Naive thymus-derived CD4-positive, alpha-beta T cell (primary cell): ENCODE measurements at regions of chr17 and their contacts with region 1.

Region 1: DNA sequence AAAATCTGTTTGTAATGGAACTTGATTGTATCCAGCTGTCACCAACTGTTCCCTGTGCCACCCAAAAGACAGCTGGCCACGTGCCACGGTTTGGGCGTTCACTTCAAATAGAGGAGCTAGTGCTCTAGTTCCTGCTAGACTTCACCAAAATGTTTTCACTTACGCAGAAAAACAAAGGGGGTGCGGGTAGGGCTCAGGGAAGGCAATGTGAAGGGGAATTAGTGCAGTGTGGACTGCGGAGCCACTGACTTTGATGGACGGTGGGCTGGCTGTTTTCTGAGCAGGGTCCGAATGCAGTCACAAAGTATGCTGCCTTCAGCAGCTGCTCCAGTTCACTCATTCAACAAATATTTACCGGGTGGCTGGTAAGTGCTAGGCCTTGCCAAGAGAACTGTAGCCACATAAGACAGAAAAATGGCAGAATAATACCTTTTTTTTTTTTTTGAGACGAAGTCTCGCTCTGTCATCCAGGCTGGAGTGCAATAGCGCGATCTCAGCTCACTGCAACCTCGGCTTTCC is 7.6 kb upstream of the CYTH1 start:
- DNase-seq: peak in 8 of 9 donors; percentile 45 to 90 (median 86)
- ATAC-seq: peak; percentile 80
- H3K4me3 ChIP-seq: no peak overlapping the region
- H3K4me3 Mint-ChIP-seq: peak overlapping the region; percentile 36 to 82 (median 74)
- H3K27ac ChIP-seq: peak overlapping the region; percentile 72
- H3K27ac Mint-ChIP-seq: peak overlapping the region; percentile 69 to 98 (median 96)
- H3K4me1 ChIP-seq: peaks cover 37 to 65% of the 10 kb centered on the region in 2 donors
- H3K4me1 Mint-ChIP-seq: peaks cover 40 to 91% (median 71%) of the 10 kb centered on the region in 7 donors
- H3K27me3 ChIP-seq: no peaks in the 10 kb centered on the region
- H3K27me3 Mint-ChIP-seq: no peaks in the 10 kb centered on the region

Region 2: DNA sequence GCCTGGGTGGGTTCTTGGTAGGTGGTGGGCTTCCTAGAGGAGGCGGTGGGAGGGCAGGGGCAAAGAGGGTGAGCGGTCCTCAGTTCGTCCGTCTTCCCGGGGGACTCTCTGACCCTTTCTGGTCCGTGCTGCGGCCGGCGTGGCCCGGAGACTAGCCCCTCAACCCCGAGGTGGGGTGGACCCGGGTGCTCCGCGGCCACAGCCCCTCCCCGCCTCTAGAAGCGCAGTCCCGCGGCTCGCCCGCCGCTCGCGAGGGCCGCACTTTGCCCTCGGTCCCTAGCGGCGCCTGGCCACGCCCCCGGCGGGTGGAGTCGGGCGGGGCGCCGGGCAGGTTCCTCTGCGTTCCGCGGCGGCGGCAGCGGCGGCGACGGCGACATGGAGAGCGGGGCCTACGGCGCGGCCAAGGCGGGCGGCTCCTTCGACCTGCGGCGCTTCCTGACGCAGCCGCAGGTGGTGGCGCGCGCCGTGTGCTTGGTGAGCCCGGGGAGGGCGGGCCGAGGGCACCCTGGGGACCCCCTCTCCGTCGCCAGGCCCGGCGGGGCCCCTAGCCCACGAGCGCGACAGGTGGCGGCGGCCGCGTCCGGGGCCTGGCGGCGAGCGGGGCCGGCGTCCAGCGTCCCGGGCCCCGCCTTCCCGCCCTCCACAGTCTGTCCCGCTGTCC is 621.4 kb before region 1 on chr17 and contains the start of gene SYNGR2:
- CTCF ChIA-PET with region 1: no interaction called
- POLR2A ChIA-PET with region 1: no interaction called
- intact Hi-C with region 1: no loop called
- DNase-seq: peak; percentile 80 to 94 (median 87)
- ATAC-seq: peak; percentile 91
- H3K4me3 ChIP-seq: peak within 1 kb of the TSS; percentile 58
- H3K4me3 Mint-ChIP-seq: peak within 1 kb of the TSS; percentile 64 to 83 (median 73)
- H3K27ac ChIP-seq: peak within 1 kb of the TSS; percentile 89
- H3K27ac Mint-ChIP-seq: peak within 1 kb of the TSS; percentile 31 to 88 (median 66)
- H3K4me1 ChIP-seq: peaks cover 6 to 25% of the 10 kb centered on the region in 2 donors
- H3K4me1 Mint-ChIP-seq: peaks cover 22 to 40% (median 35%) of the 10 kb centered on the region in 7 donors
- H3K27me3 ChIP-seq: no peaks in the 10 kb centered on the region
- H3K27me3 Mint-ChIP-seq: no peaks in the 10 kb centered on the region
- total RNA-seq, gene SYNGR2: 47.6 to 109 (median 58.6) TPM

Region 3: DNA sequence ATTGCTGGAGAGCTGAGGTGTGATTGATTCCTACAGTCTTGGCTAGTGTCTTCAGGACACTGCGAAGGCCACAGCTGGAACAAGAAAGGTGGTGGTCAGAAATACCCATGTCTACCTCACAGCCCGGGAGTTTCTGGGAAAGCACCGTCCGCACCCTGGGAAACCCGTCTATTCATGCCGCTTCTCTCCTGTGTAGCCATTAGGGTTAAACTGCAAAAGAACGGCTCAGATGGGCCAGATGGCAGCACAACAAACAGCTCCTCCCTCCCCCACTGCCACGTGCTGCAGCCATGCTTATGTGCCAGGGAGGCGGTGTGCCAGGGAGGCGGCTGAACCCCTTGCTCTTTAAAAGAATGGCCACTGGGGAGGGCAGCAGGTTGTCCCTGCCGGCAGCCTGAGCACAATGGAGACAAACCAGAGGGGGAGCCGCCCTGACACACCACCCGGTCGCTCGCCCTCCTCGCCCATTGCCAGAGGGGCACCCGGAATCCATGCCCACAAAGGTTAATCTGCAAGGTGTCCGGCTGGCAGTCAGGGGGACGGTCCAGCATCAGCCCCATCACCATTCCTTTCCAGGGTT is 72.8 kb before region 1 on chr17:
- CTCF ChIA-PET with region 1: interaction called, 14 read pairs
- POLR2A ChIA-PET with region 1: interaction called, 3 read pairs
- intact Hi-C with region 1: no loop called
- DNase-seq: peak in 6 of 9 donors; percentile 31 to 60 (median 42)
- ATAC-seq: peak; percentile 55
- H3K4me3 ChIP-seq: peak overlapping the region; percentile 5
- H3K4me3 Mint-ChIP-seq: peak overlapping the region; percentile 53 to 88 (median 78)
- H3K27ac ChIP-seq: peak overlapping the region; percentile 68
- H3K27ac Mint-ChIP-seq: peak overlapping the region in 8 of 9 donors; percentile 77 to 92 (median 88)
- H3K4me1 ChIP-seq: peaks cover 81 to 84% of the 10 kb centered on the region in 2 donors
- H3K4me1 Mint-ChIP-seq: peaks cover 71 to 98% (median 91%) of the 10 kb centered on the region in 7 donors
- H3K27me3 ChIP-seq: no peaks in the 10 kb centered on the region
- H3K27me3 Mint-ChIP-seq: no peaks in the 10 kb centered on the region

Region 4: GRCh38 chr17:78723001-78723796 is 66.5 kb before region 1 on chr17:
- CTCF ChIA-PET with region 1: interaction called, 14 read pairs
- POLR2A ChIA-PET with region 1: interaction called, 10 read pairs
- intact Hi-C with region 1: no loop called
- DNase-seq: no peak
- ATAC-seq: no peak
- H3K4me3 ChIP-seq: no peak overlapping the region
- H3K4me3 Mint-ChIP-seq: peak overlapping the region; percentile 33 to 88 (median 78)
- H3K27ac ChIP-seq: peak overlapping the region; percentile 50
- H3K27ac Mint-ChIP-seq: peak overlapping the region; percentile 50 to 96 (median 90)
- H3K4me1 ChIP-seq: peaks cover 95 to 97% of the 10 kb centered on the region in 2 donors
- H3K4me1 Mint-ChIP-seq: peaks cover 88 to 99% (median 94%) of the 10 kb centered on the region in 7 donors
- H3K27me3 ChIP-seq: no peaks in the 10 kb centered on the region
- H3K27me3 Mint-ChIP-seq: no peaks in the 10 kb centered on the region

Region 5: DNA sequence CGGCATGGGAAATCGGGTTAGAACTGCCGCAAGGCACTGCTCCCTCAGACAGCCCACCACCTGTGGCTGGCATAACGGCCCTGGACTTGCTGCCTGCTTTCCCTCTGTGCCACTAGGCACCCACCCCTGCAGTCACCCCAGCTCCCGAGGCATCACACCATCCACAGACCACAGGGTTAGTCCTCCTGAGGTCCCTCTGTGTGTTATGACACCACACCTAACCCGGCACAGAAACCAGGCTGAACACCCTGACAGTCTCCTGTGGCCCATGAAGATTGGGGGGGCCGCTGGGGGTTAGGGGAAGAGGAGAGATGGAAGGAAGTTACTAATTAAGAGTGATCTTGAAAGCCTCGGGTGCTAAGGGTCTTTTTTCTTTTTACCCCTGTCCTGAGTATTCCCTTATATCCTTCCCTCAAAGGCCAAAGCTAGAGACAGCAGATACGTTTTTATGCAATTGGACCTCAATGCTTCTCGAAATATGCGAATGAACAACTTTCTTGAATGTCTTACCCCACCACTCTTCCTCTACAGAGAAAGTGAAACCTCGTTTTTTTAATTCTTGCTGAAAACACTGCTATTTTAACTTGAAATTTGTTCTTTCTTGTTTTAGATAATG is 14.7 kb before region 1 on chr17:
- CTCF ChIA-PET with region 1: interaction called, 13 read pairs
- POLR2A ChIA-PET with region 1: interaction called, 38 read pairs
- intact Hi-C with region 1: no loop called
- DNase-seq: peak in 7 of 9 donors; percentile 49 to 71 (median 55)
- ATAC-seq: peak; percentile 55
- H3K4me3 ChIP-seq: peak overlapping the region; percentile 55
- H3K4me3 Mint-ChIP-seq: peak overlapping the region in 8 of 10 donors; percentile 85 to 98 (median 92)
- H3K27ac ChIP-seq: peak overlapping the region; percentile 81
- H3K27ac Mint-ChIP-seq: peak overlapping the region in 8 of 9 donors; percentile 91 to 98 (median 97)
- H3K4me1 ChIP-seq: peaks cover 67 to 71% of the 10 kb centered on the region in 2 donors
- H3K4me1 Mint-ChIP-seq: peaks cover 34 to 79% (median 69%) of the 10 kb centered on the region in 7 donors
- H3K27me3 ChIP-seq: no peaks in the 10 kb centered on the region
- H3K27me3 Mint-ChIP-seq: no peaks in the 10 kb centered on the region

Region 6: DNA sequence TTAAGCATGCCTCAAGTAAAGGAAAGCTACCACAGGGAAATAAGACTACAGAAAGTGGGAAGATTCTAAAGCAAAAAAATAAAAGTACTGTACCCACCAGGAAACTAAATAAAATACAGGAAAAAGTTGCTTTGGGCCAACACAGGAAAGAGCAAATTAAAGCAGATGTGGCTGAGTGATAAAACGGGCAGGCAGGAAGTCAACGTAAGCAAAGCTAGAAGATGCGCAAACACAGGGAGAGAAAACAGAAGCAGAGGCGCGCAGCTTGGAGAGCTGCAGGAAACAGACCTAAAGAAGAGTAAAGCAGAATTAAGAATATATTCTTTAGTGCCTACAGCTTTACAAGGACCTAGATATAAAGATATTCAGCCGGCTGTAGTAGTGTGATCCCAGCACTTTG is 29.2 kb after region 1 on chr17:
- CTCF ChIA-PET with region 1: interaction called, 3 read pairs
- POLR2A ChIA-PET with region 1: interaction called, 6 read pairs
- intact Hi-C with region 1: loop called in 1 of 2 experiments (anchors 2 kb)
- DNase-seq: peak in 7 of 9 donors; percentile 76 to 89 (median 86)
- ATAC-seq: peak; percentile 72
- H3K4me3 ChIP-seq: peak overlapping the region; percentile 37
- H3K4me3 Mint-ChIP-seq: peak overlapping the region; percentile 68 to 85 (median 78)
- H3K27ac ChIP-seq: peak overlapping the region; percentile 88
- H3K27ac Mint-ChIP-seq: peak overlapping the region; percentile 94 to 99 (median 96)
- H3K4me1 ChIP-seq: peaks cover 42 to 47% of the 10 kb centered on the region in 2 donors
- H3K4me1 Mint-ChIP-seq: peaks cover 36 to 76% (median 56%) of the 10 kb centered on the region in 7 donors
- H3K27me3 ChIP-seq: no peaks in the 10 kb centered on the region
- H3K27me3 Mint-ChIP-seq: no peaks in the 10 kb centered on the region